Breast epithelium (tissue), 4 donors: ENCODE measurements at regions of chr10 and their contacts with region 1.

Region 1: GRCh38 chr10:116779076-116779687 is 36.8 kb upstream of the HSPA12A start:
- DNase-seq: no peak
- H3K4me3 ChIP-seq: no peak overlapping the region
- H3K27ac ChIP-seq: no peak overlapping the region
- H3K4me1 ChIP-seq: no peaks in the 10 kb centered on the region
- H3K27me3 ChIP-seq: no peaks in the 10 kb centered on the region
- CTCF ChIP-seq: no peak
- POLR2A ChIP-seq: no peak

Region 2: GRCh38 chr10:116676118-116676517 is 103.1 kb before region 1 on chr10:
- intact Hi-C with region 1: loop called (anchors 2 kb)
- DNase-seq: no peak
- H3K4me3 ChIP-seq: no peak overlapping the region
- H3K27ac ChIP-seq: no peak overlapping the region
- H3K4me1 ChIP-seq: no peaks in the 10 kb centered on the region
- H3K27me3 ChIP-seq: no peaks in the 10 kb centered on the region
- CTCF ChIP-seq: no peak
- POLR2A ChIP-seq: no peak